ENCODE measurements at regions of chrX and their contacts with region 1.

Region 1: GRCh38 chrX:37824505-37825208 is 22.7 kb downstream of the DYNLT3 start:
- DNase-seq: no peak
- CTCF ChIP-seq: no peak

Region 2: GRCh38 chrX:37543324-37543723 is 281.3 kb before region 1 on chrX:
- in situ Hi-C with region 1: no loop called
- DNase-seq: no peak
- CTCF ChIP-seq: no peak

Region 3: DNA sequence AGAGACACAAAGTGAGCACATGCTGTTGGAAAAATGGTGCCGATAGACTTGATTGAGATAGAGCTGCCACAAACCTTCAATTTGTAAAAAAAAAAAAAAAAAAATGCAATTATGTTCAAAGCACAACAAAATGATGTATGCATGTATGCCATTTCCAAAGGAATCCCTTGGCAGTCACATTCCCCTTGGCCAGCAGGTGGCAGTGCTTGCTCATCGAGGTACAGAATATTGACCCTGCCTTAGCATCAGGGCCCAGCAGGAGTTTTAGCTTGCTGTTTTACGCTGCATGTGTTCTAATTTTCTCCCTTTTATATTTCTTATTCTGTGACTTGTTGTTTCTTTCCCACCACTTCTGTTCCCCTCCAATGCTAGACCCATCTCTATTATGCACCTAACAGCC is 79.3 kb before region 1 on chrX:
- in situ Hi-C with region 1: loop called (anchors 5 kb)
- DNase-seq: peak; percentile 58
- CTCF ChIP-seq: peak; percentile 86